HepG2 (cell line): ENCODE measurements at regions of chr11 and their contacts with region 1.

Region 1: GRCh38 chr11:74466916-74467885 is at the start of gene KCNE3:
- DNase-seq: no peak
- ATAC-seq: no peak
- H3K4me3 ChIP-seq: no peak within 1 kb of the TSS; a peak in 1 of 6 replicates
- H3K27ac ChIP-seq: no peak within 1 kb of the TSS
- H3K4me1 ChIP-seq: peaks cover 50% of the 10 kb centered on the region
- H3K27me3 ChIP-seq: no peaks in the 10 kb centered on the region
- CTCF ChIP-seq: no peak
- EP300 ChIP-seq: no peak
- POLR2A ChIP-seq: no peak
- RAD21 ChIP-seq: no peak
- total RNA-seq, gene KCNE3: 0.33 and 0.41 TPM in 2 replicates

Region 2: DNA sequence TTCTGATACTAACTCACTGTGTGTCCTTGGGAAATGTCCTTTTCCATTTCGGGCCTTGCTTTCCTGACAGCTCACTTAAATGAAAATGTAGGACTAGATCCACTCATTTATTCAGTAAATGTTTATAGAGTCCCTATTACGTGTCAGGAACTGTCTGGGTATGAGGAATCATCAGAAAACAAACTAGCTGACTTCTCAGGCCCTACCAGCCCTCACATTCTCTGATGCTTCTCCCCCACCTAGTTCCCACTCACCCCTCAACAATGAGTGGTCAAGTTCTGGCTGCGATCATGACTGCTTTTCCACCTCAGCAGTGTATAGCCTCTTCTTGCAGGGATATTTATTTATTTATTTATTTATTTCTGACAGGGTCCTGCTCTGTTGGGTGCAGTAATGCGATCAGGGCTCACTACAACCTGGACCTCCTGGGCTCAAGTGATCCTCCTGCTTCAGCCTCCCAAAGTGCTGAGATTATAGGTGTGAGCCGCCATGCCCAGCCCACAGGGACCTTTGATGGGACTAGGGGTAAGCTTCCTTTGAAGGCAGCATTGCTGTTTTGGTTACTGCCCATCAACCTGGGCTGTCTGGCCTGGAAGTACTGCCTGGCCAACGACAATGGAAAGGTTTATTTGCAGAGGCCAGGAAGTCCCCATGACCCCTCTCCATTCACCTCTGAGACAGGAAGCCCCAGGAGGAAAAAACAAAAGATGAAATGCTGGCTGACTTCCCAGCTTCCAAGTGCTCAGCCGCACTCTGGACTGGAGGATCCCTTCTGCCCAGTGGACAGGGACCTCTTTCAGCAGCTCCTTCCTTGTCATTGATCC is 92.1 kb after region 1 on chr11:
- CTCF ChIA-PET with region 1: no interaction called
- POLR2A ChIA-PET with region 1: no interaction called
- in situ Hi-C with region 1: loop called (anchors 10 kb)
- intact Hi-C with region 1: no loop called
- DNase-seq: peak; percentile 81
- ATAC-seq: peak; percentile 91
- H3K4me3 ChIP-seq: peak overlapping the region in 1 of 3 experiments; percentile 15; a peak in 1 of 6 replicates
- H3K27ac ChIP-seq: peak overlapping the region; percentile 50
- H3K4me1 ChIP-seq: peaks cover 31% of the 10 kb centered on the region
- H3K27me3 ChIP-seq: no peaks in the 10 kb centered on the region
- CTCF ChIP-seq: no peak
- EP300 ChIP-seq: peak in 1 of 2 experiments; percentile 62; a peak in 2 of 4 replicates
- POLR2A ChIP-seq: no peak
- RAD21 ChIP-seq: no peak